Activated T-helper 1 cell treated with anti-CD3 and anti-CD28 coated beads, Interleukin-12 subunit alpha, Interleukin-12 subunit beta, Interleukin-2, Interleukin-4 antibody, amounts not matched to agents 30 ng/mL and 10 ng/mL and 1 ng/mL, durations not matched to agents 14 hours and 24 hours and 36 hours (primary cell): ENCODE measurements at regions of chr17 and their contacts with region 1.

Region 1: DNA sequence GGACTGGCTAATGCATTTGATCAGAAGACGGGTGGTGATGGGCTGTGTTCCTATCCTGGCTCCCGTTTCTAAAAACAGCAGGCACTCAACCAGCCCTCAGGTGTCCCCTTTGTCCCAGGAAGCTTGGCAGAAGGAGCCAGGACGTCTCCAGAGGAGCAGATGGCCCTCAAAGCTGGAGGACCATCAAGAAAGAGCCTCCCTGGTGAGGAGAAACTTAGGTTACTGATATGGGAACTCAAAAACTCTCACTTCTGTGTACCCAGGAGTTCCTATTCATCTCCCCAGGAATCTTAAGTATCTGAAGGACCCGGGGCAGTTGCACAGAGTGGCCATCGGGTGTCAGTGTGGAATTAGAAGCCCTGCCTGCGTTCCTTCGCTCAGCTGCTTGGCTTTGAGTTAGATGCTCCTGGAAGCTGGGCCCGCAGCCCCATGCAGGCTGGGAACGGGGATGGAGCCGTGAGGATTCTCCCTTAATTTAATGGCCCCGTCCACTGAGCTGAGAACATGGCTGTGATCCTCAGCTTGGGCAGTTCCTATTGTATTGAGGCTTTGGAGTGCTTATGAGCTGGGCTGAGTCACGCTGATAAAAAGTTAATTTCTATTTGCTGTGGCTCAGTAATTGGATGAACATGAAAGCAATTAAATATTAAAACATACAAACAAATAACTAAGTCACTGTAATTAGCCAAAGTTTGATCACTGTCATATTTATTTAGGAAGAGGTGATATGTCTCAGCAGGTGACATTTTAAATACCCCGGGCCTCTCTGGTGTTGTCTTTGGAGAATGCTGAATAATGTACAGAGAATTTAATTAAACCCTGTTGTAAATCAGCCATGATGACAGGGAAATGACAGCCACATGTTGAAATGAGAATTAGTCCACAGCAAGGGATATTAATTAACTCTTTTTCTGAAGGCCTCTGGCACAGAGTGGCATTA is 402.1 kb downstream of the SEC14L1 start:
- DNase-seq: peak; percentile 41
- H3K4me3 Mint-ChIP-seq: no peak overlapping the region
- H3K27ac Mint-ChIP-seq: no peak overlapping the region
- H3K4me1 Mint-ChIP-seq: no peaks in the 10 kb centered on the region
- H3K27me3 Mint-ChIP-seq: peaks cover 15% of the 10 kb centered on the region

Region 2: DNA sequence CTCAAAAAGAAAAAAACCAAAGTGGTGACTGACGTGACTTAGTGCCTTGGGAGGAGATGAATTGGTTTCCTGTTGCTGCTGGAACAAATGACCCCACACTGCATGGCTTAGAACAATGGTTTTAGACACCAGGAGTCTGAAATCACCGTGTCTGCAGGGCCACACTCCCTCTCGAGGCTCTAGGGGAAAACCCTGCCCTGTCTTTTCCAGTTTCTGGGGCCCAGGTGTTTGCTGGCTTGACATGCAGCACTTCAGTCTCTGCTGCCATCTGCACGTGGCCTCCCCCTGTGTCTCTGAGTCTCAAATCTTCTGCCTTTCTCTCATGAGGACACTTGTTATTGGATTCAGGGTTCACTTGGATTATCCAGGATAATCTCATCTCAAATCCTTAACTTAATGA is 91.9 kb after region 1 on chr17:
- intact Hi-C with region 1: loop called (anchors 2 kb)
- DNase-seq: peak; percentile 30
- H3K4me3 Mint-ChIP-seq: no peak overlapping the region
- H3K27ac Mint-ChIP-seq: peak overlapping the region; percentile 68
- H3K4me1 Mint-ChIP-seq: peaks cover 20% of the 10 kb centered on the region
- H3K27me3 Mint-ChIP-seq: peaks cover 2% of the 10 kb centered on the region

Region 3: DNA sequence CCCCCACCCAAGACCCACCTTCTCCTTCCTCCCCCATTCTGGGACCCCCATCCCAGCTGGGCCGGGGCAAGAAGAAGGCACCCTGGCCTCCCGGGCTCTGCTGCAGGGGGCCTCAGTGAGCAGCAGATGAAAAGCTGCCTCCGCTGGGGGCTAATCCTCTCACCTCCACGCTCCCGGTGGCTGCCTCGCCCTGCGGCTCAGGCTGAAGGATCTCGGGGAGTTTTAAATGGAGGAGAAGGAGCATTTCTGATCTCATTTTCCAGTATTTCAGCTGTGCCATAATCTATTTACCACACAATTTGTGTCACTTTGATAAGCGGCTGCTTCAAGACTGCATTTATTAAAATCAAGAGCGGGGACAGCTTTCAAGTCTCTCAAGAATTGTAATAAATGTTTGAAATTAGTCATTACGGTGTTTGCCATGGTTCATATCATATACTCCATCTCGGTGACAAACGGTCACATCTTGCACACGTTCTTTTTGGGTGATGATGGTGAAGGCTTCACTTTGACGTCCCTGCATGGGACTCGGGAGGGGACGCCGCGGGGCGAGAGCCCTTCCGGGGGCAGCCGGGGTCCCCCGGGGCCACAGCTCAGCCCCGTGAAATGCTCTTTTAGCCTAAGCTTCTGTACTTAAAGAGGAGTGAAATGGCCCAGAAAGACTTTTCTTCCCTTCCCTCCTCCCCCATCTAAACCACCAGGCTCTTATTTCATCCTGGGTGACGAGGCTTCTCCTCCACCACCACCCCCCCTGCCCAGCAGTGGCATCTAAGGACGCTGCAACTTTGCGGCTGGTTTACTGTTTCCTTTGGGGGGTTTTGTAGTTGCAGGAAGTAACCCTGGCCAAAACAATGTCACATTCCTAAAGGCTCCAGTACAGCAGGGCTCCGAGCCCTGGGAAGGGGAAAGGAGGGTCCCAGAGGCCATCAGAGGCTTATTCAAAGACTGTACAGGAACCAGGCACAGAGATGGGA is 102.5 kb after region 1 on chr17:
- intact Hi-C with region 1: loop called (anchors 5 kb)
- DNase-seq: peak; percentile 19
- H3K4me3 Mint-ChIP-seq: peak overlapping the region; percentile 40
- H3K27ac Mint-ChIP-seq: peak overlapping the region; percentile 86
- H3K4me1 Mint-ChIP-seq: peaks cover 24% of the 10 kb centered on the region
- H3K27me3 Mint-ChIP-seq: peaks cover 12% of the 10 kb centered on the region

Region 4: DNA sequence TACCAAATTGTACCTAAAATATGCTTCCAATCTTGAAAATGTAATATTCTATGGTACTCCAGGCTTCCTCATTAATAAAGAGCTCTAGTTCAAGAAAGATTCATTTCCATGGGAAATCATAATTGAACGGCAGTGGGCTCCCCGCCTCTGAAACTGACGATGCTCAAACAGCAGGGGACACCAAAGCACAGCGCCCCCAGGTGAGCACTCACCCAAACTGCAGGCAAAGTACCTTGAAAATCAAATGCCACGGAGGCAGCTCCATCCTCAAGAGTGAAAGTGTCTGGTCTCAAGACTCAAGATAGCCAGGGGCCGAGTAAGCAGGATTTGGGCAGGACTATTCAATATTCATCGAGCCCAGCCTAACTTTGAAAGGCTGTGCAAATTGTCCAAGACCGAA is 198.3 kb after region 1 on chr17:
- intact Hi-C with region 1: loop called (anchors 5 kb)
- DNase-seq: peak; percentile 6
- H3K4me3 Mint-ChIP-seq: no peak overlapping the region
- H3K27ac Mint-ChIP-seq: no peak overlapping the region
- H3K4me1 Mint-ChIP-seq: no peaks in the 10 kb centered on the region
- H3K27me3 Mint-ChIP-seq: peaks cover 11% of the 10 kb centered on the region

Region 5: DNA sequence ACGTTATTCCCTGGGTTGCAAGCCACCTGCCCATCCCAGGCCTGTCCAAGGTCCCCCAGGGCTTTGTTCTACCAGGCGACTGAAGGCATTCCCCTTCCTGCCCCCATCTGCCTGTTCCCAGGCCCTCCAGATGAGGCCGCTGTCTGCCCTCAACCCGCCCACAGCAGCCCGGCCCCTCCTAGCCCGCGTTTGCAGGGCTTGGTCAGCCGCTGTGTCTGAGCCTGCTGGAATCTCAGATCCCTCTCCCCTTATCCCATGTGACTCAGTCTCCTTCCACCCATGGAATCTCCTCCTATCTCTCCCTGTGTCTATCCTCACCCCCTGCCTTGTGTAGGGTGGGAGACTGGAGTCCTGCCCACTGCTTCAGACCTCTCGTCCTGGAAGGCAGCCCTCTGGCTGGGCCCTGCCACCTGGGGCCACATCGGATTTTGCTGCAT is 229.7 kb after region 1 on chr17:
- intact Hi-C with region 1: loop called (anchors 10 kb)
- DNase-seq: peak; percentile 45
- H3K4me3 Mint-ChIP-seq: no peak overlapping the region
- H3K27ac Mint-ChIP-seq: no peak overlapping the region
- H3K4me1 Mint-ChIP-seq: no peaks in the 10 kb centered on the region
- H3K27me3 Mint-ChIP-seq: peaks cover 30% of the 10 kb centered on the region